CD14-positive monocyte (primary cell): ENCODE measurements at regions of chr3 and their contacts with region 1.

Region 1: DNA sequence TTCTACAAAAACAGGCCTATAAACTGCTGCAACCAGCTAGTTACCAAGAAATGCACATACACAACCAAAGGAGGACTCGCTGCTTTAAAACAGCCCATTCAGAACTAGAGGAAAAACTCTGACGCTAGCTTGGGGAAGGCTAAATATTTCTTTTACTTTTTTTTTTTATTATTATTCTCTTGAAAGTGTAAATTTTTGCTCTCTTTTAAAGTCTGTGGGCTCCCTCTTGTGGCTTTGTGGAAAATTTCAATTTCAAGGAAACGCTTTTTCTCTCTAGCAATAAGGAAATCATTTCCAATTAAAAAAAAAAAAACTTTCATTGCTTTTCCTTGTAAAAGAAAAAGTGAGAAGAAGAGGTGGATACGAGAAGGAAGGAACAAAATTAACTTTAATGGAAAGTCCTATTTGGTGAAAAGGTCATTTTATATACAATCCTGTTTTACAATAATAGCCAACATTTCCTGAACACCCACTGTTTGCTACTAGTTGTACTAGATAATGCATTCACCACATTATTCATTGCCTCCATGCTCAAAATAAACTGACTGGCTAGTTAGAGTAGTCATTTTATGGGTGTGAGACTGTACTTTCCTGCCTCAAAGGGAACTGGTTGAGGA is 51.2 kb upstream of the SAMMSON start:
- DNase-seq: peak in 1 of 3 donors; percentile 1
- H3K4me3 ChIP-seq: no peak overlapping the region
- H3K4me3 Mint-ChIP-seq: no peak overlapping the region
- H3K27ac ChIP-seq: no peak overlapping the region
- H3K27ac Mint-ChIP-seq: no peak overlapping the region
- H3K4me1 ChIP-seq: no peaks in the 10 kb centered on the region
- H3K4me1 Mint-ChIP-seq: no peaks in the 10 kb centered on the region
- H3K27me3 ChIP-seq: no peaks in the 10 kb centered on the region
- H3K27me3 Mint-ChIP-seq: peaks cover 0 to 2% (median 0%) of the 10 kb centered on the region in 3 donors
- CTCF ChIP-seq: peak; percentile 84

Region 2: DNA sequence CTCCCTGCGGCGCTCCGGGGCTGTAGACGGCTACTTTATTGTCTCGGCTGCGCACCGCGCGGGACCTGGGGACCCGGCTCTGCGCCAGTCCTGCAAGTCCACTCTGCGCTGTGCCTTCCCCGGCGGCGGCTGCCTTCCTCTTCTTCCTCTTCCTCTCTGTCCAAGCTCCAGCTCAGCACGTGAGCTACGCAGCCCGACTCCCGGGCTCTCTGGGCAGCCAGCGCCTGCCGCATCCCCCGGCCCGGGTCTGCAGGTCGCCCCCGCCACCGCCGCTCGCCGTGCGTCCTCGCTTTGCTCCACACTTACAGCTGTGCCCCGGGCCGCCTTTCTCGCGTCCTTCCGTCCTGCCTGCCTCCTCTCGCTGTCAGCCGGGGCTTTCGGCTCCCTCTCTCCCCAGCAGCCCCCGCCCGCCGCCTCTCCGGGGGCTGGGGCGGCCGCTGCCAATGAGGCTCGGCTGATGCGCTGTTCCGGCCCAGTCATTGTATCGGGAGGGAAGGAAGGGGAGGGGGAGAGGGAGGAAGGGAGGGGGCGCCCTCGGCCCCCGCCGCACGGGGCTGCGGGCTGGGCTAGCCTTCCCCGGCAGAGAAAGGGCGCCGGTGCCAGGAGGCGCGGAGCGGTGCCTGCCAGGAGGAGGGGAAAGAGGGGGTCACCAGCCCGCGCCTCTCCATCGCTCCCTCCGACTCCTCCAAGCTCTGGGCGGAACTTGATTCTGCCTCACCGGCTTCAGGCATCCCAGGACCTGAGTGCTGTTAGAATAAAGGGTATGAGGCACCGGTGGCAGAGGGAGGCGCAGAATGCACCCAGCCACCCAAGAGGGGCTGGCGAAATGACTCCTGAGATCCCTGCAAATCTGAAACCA is 405.9 kb before region 1 on chr3:
- intact Hi-C with region 1: no loop called
- DNase-seq: peak; percentile 32 to 66 (median 44)
- H3K4me3 ChIP-seq: peak overlapping the region; percentile 52 to 92 (median 55)
- H3K4me3 Mint-ChIP-seq: peak overlapping the region; percentile 99 to 100
- H3K27ac ChIP-seq: peak overlapping the region in 1 of 2 donors; percentile 31
- H3K27ac Mint-ChIP-seq: peak overlapping the region in 3 of 7 donors; percentile 6 to 81 (median 39)
- H3K4me1 ChIP-seq: peaks cover 21 to 30% of the 10 kb centered on the region in 2 donors
- H3K4me1 Mint-ChIP-seq: peaks cover 35% of the 10 kb centered on the region
- H3K27me3 ChIP-seq: no peaks in the 10 kb centered on the region
- H3K27me3 Mint-ChIP-seq: peaks cover 7 to 9% (median 9%) of the 10 kb centered on the region in 3 donors
- CTCF ChIP-seq: no peak

Region 3: GRCh38 chr3:69691860-69692259 is 256.5 kb before region 1 on chr3:
- intact Hi-C with region 1: loop called in 1 of 2 experiments (anchors 10 kb)
- DNase-seq: no peak
- H3K4me3 ChIP-seq: no peak overlapping the region
- H3K4me3 Mint-ChIP-seq: no peak overlapping the region
- H3K27ac ChIP-seq: no peak overlapping the region
- H3K27ac Mint-ChIP-seq: no peak overlapping the region
- H3K4me1 ChIP-seq: peaks cover 4% of the 10 kb centered on the region in 2 donors
- H3K4me1 Mint-ChIP-seq: peaks cover 12% of the 10 kb centered on the region
- H3K27me3 ChIP-seq: no peaks in the 10 kb centered on the region
- H3K27me3 Mint-ChIP-seq: peaks cover 2 to 5% (median 3%) of the 10 kb centered on the region in 3 donors
- CTCF ChIP-seq: no peak